ENCODE measurements at regions of chr10 and their contacts with region 1.

Region 1: GRCh38 chr10:113930482-113931057 is 76.1 kb downstream of the NHLRC2 start:
- DNase-seq: peak; percentile 32
- H3K4me3 ChIP-seq: no peak overlapping the region
- H3K27ac ChIP-seq: peak overlapping the region; percentile 68
- H3K4me1 ChIP-seq: peaks cover 22% of the 10 kb centered on the region
- H3K27me3 ChIP-seq: no peaks in the 10 kb centered on the region
- CTCF ChIP-seq: no peak
- POLR2A ChIP-seq: no peak

Region 2: DNA sequence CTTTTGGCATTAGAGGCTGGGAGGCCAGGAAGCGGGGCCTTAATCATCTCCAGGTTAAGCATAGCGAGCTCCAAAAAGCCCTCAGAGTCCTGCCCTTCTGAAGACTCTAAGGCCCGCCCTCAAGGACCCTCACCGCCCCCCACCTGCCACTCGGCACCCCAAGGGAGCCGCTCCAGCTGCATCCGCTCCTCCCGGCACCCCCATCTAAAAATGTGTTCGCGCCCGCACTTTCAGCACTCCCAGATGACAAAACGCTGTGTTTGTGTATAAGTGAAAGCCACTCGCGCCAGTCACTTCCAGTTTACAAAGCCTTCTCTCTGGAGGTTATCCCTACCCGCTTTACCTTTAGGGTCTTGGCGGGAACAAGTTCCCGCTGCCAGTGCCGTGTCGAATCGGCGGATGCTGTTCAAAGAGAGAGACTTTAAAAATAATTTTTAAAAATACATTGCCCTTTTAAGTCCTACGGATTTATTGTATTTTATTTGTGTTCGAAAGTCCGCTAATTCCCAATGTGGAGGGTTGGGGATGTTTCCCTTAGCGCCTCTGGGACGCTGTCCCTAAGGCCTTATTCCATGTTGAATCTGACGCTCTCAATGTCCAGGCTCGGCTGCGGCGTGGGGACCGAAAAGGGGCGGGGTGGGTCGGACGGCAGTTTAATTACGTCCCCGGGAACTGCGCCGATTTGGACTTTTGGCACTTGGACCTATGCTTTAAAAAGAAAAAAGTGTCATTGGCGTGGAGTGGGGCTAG is 76.4 kb before region 1 on chr10 and contains the starts of genes DCLRE1A and NHLRC2:
- CTCF ChIA-PET with region 1: interaction called, 3 read pairs
- POLR2A ChIA-PET with region 1: no interaction called
- dilution Hi-C with region 1: no loop called
- intact Hi-C with region 1: loop called (anchors 2 kb)
- DNase-seq: peak; percentile 84
- H3K4me3 ChIP-seq: peak within 1 kb of the TSS; percentile 87 to 99 (median 87)
- H3K27ac ChIP-seq: peak within 1 kb of the TSS; percentile 96
- H3K4me1 ChIP-seq: peaks cover 43% of the 10 kb centered on the region
- H3K27me3 ChIP-seq: no peaks in the 10 kb centered on the region
- CTCF ChIP-seq: no peak
- POLR2A ChIP-seq: no peak
- total RNA-seq, gene DCLRE1A: 5.4 and 6.7 TPM in 2 replicates
- total RNA-seq, gene NHLRC2: 28.2 and 34.5 TPM in 2 replicates

Region 3: DNA sequence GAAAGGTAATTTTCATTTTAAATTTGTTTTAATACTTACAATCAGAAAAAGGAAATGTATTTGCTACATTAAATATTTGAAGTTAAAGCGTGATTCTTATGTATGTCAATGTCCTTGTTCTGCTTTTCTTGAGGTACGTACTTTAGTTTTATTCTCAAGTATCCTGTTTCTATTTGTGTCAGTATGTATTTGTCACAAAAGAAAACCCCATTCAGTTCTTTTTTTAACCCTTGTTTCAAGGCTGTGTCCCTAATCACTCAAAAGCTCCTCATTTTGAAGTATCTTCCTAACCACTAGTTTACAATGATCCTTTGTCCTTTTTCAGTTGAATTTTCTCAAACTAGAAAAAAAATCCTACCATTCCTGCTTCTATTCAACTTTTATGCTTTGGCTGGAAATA is 50.9 kb before region 1 on chr10:
- CTCF ChIA-PET with region 1: no interaction called
- POLR2A ChIA-PET with region 1: no interaction called
- dilution Hi-C with region 1: no loop called
- intact Hi-C with region 1: loop called (anchors 2 kb)
- DNase-seq: peak; percentile 13
- H3K4me3 ChIP-seq: no peak overlapping the region
- H3K27ac ChIP-seq: peak overlapping the region; percentile 72
- H3K4me1 ChIP-seq: peaks cover 33% of the 10 kb centered on the region
- H3K27me3 ChIP-seq: no peaks in the 10 kb centered on the region
- CTCF ChIP-seq: no peak
- POLR2A ChIP-seq: no peak